Lower leg skin (tissue), 4 donors: ENCODE measurements at regions of chr5 and their contacts with region 1.

Region 1: GRCh38 chr5:103364074-103364473 is 105.5 kb downstream of the MACIR start:
- DNase-seq: no peak
- H3K4me3 ChIP-seq: no peak overlapping the region
- CTCF ChIP-seq: no peak
- POLR2A ChIP-seq: no peak

Region 2: GRCh38 chr5:102077920-102078319 is 1286.2 kb before region 1 on chr5:
- intact Hi-C with region 1: loop called (anchors 5 kb)
- DNase-seq: no peak
- H3K4me3 ChIP-seq: no peak overlapping the region
- CTCF ChIP-seq: no peak
- POLR2A ChIP-seq: no peak